Activated CD4-positive, alpha-beta T cell treated with anti-CD3 and anti-CD28 coated beads for 36 hours (primary cell): ENCODE measurements at regions of chr3 and their contacts with region 1.

Region 1: DNA sequence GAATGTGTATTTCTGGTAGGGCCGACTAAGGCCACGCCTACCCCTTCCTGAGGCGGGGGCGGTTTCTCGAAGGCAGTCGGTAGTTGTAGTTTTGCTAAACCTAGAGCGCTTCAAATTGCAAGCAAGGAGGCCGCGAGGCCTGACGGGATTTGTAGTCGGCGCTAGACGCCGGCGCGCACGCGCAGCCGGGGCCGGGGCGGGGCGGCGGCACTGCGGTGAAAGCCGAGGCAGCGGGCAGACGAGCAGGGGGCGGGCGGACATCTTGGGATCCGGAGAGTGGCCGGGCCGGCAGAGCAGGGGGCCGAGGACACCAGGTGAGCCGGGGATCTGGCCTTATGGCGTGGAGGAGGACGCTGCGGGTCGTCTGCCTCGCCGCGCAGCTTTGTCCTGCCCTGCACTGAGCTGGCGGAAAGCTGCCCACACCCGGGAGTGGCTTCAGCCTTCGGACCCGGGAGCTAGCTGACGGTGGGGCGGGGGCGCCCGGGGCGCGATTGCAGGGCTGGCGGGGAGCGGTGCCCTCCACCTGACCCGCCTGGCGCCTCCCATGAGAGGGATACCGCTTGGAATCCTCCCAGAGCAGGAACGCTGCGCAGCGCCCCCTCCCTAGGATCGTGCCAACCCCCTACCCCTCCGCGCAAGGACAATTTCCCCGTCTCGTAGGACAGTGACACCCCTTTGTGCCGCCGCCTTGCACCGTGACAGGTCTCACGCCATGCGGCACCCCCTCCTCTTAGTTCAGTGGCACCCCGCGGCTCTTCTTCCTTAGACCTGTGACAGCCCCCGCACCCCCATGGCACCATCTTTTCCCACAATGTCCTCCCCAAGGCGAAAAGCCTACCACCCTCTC is at the start of gene AP2M1:
- DNase-seq: peak; percentile 98
- ATAC-seq: peak; percentile 97
- H3K4me3 Mint-ChIP-seq: peak within 1 kb of the TSS; percentile 95
- H3K27ac Mint-ChIP-seq: peak within 1 kb of the TSS; percentile 89
- H3K4me1 Mint-ChIP-seq: peaks cover 23% of the 10 kb centered on the region
- H3K27me3 Mint-ChIP-seq: no peaks in the 10 kb centered on the region
- total RNA-seq, gene AP2M1: 192 to 204 TPM

Region 2: GRCh38 chr3:184017672-184018423 is 157.0 kb before region 1 on chr3 and contains the start of gene ABCC5:
- CTCF ChIA-PET with region 1: interaction called, 4 read pairs
- POLR2A ChIA-PET with region 1: no interaction called
- intact Hi-C with region 1: loop called in 1 of 2 experiments (anchors 1 kb)
- DNase-seq: peak; percentile 91
- ATAC-seq: peak; percentile 96
- H3K4me3 Mint-ChIP-seq: peak within 1 kb of the TSS; percentile 98
- H3K27ac Mint-ChIP-seq: peak within 1 kb of the TSS; percentile 85
- H3K4me1 Mint-ChIP-seq: peaks cover 17% of the 10 kb centered on the region
- H3K27me3 Mint-ChIP-seq: peaks cover 9% of the 10 kb centered on the region
- total RNA-seq, gene ABCC5: 12.5 to 15.8 TPM

Region 3: DNA sequence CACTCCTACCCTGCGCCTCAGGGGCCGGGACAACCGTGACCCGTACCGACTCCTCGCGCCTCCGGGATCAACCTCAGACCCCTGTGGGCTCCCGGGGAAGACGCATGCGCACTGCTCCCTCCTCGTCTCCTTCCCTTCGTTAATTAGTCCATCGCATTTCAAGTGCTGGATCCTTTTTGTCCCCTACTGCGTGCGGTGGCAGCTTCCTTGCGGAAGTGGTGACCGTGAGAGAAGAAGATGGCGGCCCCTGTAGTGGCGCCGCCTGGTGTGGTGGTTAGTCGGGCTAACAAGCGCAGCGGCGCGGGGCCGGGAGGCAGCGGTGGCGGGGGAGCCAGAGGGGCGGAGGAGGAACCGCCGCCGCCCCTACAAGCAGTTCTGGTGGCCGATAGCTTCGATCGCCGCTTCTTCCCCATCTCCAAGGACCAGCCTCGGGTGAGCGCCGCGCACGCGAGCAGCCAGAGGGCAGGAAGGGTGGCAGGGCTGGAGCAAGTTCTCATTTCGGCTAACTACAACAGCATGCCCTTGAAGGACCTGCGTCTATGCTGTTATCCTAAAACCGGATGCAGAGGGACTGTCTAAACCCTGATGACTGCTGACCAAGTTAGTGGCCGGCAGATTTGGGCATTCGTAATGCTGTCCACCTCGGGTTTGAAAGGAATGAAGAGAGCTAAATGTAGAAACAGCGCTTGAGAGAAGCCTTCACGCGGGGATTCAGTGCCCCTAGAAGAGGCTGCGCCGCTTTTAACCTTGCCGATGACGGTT is 39.5 kb before region 1 on chr3 and contains the start of gene EIF2B5:
- CTCF ChIA-PET with region 1: interaction called, 6 read pairs
- POLR2A ChIA-PET with region 1: no interaction called
- intact Hi-C with region 1: loop called (anchors 1 kb)
- DNase-seq: peak; percentile 93
- ATAC-seq: peak; percentile 90
- H3K4me3 Mint-ChIP-seq: peak within 1 kb of the TSS; percentile 97
- H3K27ac Mint-ChIP-seq: peak within 1 kb of the TSS; percentile 92
- H3K4me1 Mint-ChIP-seq: peaks cover 29% of the 10 kb centered on the region
- H3K27me3 Mint-ChIP-seq: no peaks in the 10 kb centered on the region
- total RNA-seq, gene EIF2B5: 46.4 to 60.6 TPM

Region 4: DNA sequence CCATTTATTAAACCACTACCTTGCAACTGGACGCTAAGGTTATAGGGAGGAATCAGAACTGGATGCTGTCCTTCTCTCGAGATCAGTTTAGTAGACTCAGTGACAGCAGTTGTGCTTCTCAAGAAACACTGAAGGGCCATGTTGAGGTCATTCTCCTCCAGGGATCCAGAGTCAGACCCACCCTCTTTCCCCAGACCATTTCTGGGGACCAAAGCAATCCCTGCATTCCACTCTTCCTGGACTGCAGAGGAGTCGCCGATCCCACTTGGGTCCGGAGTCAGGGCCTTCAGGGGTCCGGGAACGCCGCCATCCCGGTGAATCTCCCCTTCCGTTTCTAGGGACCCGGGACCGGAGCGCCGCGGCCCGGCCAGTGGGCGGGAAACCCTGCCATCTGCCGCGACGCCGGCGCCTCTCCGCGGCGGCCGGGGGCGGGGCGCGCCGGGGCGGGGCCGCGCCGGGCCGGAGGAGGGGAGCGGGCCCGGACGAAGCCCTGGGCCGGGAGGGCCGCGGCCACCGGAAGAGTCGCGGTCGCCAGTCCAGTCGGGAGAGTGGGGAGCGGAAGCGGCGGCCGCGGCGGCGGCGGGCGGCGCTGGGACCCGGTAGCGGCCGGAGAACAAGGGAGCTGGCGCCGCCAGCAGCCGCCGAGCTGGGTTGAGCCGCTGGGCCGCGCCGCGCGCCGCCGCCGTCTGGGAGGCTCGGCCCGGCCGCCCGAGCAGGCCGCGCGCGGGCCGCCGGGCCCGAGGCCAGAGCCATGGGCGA is 19.8 kb before region 1 on chr3 and contains the start of gene DVL3:
- CTCF ChIA-PET with region 1: interaction called, 4 read pairs
- POLR2A ChIA-PET with region 1: no interaction called
- intact Hi-C with region 1: loop called (anchors 1 kb)
- DNase-seq: peak; percentile 61
- ATAC-seq: peak; percentile 71
- H3K4me3 Mint-ChIP-seq: peak within 1 kb of the TSS; percentile 97
- H3K27ac Mint-ChIP-seq: peak within 1 kb of the TSS; percentile 80
- H3K4me1 Mint-ChIP-seq: peaks cover 23% of the 10 kb centered on the region
- H3K27me3 Mint-ChIP-seq: no peaks in the 10 kb centered on the region
- total RNA-seq, gene DVL3: 24.9 to 29.6 TPM

Region 5: DNA sequence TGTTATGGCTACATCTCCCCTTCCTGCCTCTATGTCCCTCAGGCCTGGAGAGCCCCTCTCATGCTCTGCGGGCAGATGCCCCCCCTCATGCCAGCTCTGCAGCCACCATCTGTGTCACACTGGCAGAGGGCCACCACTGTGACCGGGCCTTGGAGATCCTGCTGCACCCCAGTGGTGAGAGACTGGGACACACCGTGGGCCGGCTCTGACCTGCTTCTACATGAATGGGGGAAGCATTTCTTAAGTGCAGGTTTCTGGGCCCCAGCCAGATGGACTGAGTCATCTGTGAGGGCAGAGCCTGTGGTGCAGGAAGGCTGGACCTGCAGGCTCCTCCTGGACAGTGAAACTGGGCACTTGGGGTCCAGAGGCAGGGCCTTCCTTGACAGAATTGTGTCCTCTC is 59.4 kb after region 1 on chr3:
- CTCF ChIA-PET with region 1: no interaction called
- POLR2A ChIA-PET with region 1: no interaction called
- intact Hi-C with region 1: no loop called
- DNase-seq: no peak
- ATAC-seq: no peak
- H3K4me3 Mint-ChIP-seq: no peak overlapping the region
- H3K27ac Mint-ChIP-seq: no peak overlapping the region
- H3K4me1 Mint-ChIP-seq: peaks cover 4% of the 10 kb centered on the region
- H3K27me3 Mint-ChIP-seq: peaks cover 24% of the 10 kb centered on the region

Region 6: DNA sequence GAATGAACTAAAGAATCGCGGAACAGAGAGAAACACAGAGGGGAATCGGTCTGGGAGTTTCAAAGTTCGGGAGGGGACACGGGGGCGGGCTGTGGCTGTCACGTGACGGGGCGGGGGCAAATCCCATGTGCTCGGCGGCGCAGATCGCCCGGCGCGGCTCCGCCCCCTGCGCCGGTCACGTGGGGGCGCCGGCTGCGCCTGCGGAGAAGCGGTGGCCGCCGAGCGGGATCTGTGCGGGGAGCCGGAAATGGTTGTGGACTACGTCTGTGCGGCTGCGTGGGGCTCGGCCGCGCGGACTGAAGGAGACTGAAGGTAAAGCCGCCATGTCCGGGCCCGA is 139.5 kb after region 1 on chr3 and contains the start of gene EIF4G1:
- CTCF ChIA-PET with region 1: no interaction called
- POLR2A ChIA-PET with region 1: no interaction called
- intact Hi-C with region 1: loop called (anchors 1 to 5 kb)
- DNase-seq: peak; percentile 96
- ATAC-seq: peak; percentile 89
- H3K4me3 Mint-ChIP-seq: peak within 1 kb of the TSS; percentile 84
- H3K27ac Mint-ChIP-seq: peak within 1 kb of the TSS; percentile 90
- H3K4me1 Mint-ChIP-seq: peaks cover 29% of the 10 kb centered on the region
- H3K27me3 Mint-ChIP-seq: no peaks in the 10 kb centered on the region
- total RNA-seq, gene EIF4G1: 479 to 556 TPM

Region 7: DNA sequence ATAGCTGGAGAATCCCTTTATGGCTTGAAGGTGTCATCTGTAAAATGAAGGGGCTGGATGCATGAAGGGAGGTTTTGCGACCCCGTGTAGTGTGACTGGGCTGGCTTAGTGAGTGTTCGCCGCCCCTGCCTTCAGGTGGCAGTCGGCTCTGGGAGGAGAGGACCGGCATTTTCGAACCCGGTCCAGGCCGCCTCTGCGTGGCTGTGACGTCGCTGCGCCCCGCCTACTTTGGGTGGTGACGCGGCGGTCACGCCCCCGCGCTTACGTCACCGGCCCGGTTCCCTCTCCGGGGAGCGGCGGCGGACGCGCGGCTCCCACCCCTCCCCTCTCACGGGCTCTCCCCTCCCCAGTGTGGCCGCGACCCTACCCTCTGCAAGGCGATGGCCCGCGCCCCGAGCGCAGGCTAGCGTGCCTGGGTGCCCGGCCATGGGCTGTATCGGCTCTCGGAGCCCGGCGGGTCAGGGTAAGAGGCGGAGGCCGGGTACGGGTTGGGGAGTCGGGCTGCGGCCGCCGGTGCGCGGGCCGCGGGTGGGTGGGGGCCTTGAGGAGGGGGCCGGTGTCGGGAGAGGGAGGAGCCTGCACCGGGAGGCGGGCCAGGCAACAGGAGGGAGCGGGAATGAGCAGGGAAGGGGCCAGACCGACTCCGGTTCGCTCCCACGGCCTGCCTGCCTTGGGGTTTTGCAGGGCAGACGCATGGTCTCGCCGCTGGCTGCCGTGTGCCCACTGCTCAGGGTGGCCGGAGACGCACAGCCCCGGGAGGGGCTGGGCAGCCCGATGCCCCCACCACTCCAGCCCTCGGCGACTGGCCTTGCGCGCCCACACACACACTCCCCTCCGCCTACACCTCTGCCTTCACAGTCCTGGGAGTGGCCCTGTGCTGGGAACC is 161.0 kb after region 1 on chr3:
- CTCF ChIA-PET with region 1: no interaction called
- POLR2A ChIA-PET with region 1: no interaction called
- intact Hi-C with region 1: loop called in 1 of 2 experiments (anchors 1 kb)
- DNase-seq: peak; percentile 92
- ATAC-seq: peak; percentile 50
- H3K4me3 Mint-ChIP-seq: peak overlapping the region; percentile 75
- H3K27ac Mint-ChIP-seq: peak overlapping the region; percentile 85
- H3K4me1 Mint-ChIP-seq: peaks cover 62% of the 10 kb centered on the region
- H3K27me3 Mint-ChIP-seq: no peaks in the 10 kb centered on the region

Region 8: DNA sequence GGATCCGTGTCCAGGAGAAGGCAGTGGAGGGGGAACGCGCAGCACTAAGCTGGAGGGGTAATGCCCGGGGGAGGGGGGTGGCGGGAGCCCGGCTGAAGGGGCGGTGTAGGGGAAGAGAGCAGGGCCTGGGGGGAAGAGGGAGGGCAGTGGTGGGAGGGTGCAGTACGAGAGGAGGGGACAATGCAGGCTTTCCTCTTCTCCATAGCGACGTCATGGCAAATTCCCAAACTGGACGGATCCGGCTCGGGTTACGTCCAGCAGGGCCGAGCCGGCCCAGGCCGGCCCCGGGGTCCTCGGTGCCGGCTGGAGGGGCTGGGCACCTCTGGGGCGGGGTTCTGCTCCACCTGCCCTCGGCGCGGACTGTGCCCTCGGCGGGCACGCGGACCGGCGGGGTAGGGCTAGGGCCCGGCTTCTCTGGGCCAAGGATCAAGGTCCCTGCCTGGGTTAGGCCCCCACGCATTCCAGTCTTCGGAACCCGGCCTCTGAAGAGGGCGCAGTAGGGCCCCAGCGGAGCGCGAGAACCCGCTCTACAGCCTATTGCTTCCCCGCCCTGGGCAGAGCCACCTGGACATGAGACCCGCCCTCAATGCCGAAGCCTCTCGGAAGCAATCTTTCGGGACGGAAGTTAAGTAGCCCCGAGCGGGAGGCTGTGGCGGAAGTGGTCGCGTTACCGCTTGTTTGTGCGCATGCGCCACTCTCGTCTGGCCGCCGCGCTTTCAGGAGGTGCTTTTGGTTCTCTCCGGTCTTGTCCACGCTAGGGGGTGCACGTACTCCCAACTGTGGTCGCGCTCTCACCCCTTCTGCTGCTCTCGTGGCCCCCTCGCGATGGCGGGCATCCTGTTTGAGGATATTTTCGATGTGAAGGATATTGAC is 188.0 kb after region 1 on chr3:
- CTCF ChIA-PET with region 1: no interaction called
- POLR2A ChIA-PET with region 1: no interaction called
- intact Hi-C with region 1: loop called in 1 of 2 experiments (anchors 1 kb)
- DNase-seq: peak; percentile 97
- ATAC-seq: peak; percentile 91
- H3K4me3 Mint-ChIP-seq: peak overlapping the region; percentile 98
- H3K27ac Mint-ChIP-seq: peak overlapping the region; percentile 98
- H3K4me1 Mint-ChIP-seq: peaks cover 30% of the 10 kb centered on the region
- H3K27me3 Mint-ChIP-seq: no peaks in the 10 kb centered on the region

Region 9: DNA sequence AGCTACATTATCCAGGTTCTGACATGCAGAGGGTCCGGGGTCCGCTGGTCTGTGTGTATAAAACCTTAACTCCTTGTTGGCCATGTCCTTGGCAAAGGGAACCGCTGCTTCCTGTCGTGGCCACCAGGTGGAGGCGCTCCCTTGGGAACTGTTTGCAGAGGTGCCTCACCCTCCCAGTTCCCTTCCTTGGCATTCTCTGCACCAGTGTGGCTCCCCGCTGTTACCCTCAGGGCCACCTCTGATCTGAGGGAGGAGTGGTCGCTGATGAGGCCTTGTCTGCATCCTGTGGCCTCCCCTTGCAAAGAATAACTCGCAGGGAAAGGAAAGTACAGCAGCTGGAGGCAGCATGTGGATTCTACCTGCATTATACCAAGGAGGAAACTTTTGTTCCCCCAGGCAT is 294.6 kb after region 1 on chr3:
- CTCF ChIA-PET with region 1: no interaction called
- POLR2A ChIA-PET with region 1: no interaction called
- intact Hi-C with region 1: no loop called
- DNase-seq: peak; percentile 73
- ATAC-seq: no peak
- H3K4me3 Mint-ChIP-seq: no peak overlapping the region
- H3K27ac Mint-ChIP-seq: no peak overlapping the region
- H3K4me1 Mint-ChIP-seq: peaks cover 16% of the 10 kb centered on the region
- H3K27me3 Mint-ChIP-seq: peaks cover 10% of the 10 kb centered on the region

Region 10: DNA sequence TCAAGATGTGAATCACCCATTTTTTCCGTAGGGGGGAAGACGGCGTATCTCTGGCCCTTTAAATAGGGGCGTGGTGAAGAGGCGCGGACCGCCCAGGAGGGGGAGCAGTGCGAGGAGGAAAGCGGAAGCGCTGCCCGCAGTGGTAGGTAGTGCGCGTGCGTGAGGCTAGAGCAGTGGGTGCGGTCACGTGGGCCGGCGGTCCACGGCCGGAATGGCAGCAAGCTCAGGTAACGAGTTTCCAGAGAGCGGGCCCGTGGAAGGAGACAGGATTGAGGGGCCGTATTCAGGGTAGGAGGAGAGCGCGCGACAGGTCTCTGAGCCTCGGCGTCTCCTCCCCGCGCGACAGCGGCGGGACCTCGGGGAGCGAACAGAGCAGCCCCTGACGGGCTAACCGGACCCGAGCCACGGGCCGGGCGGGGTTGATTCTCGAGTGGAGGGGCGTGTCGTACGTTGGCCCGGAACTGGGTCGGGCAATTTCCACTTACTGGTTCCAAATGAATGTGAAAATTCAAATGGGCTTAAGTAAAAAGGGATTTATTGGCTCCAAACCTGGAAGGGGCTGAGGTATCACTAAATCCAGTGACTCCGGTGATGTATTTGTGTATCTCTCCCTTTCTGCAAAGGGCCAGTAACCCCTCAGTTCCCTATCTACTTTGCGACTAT is 637.3 kb after region 1 on chr3 and contains the start of gene VPS8:
- CTCF ChIA-PET with region 1: no interaction called
- POLR2A ChIA-PET with region 1: no interaction called
- intact Hi-C with region 1: no loop called
- DNase-seq: peak; percentile 97
- ATAC-seq: peak; percentile 82
- H3K4me3 Mint-ChIP-seq: peak within 1 kb of the TSS; percentile 97
- H3K27ac Mint-ChIP-seq: peak within 1 kb of the TSS; percentile 94
- H3K4me1 Mint-ChIP-seq: peaks cover 48% of the 10 kb centered on the region
- H3K27me3 Mint-ChIP-seq: no peaks in the 10 kb centered on the region
- total RNA-seq, gene VPS8: 24.7 to 33.9 TPM